Pancreas (tissue), 10 donors: ENCODE measurements at regions of chr5 and their contacts with region 1.

Region 1: GRCh38 chr5:132007399-132008165 is 3.9 kb downstream of the ACSL6 start:
- DNase-seq: peak; percentile 68 to 85 (median 76)
- ATAC-seq: peak; percentile 66 to 84 (median 78)
- H3K4me3 ChIP-seq: no peak overlapping the region
- H3K27ac ChIP-seq: no peak overlapping the region
- H3K4me1 ChIP-seq: no peaks in the 10 kb centered on the region
- H3K27me3 ChIP-seq: no peaks in the 10 kb centered on the region
- CTCF ChIP-seq: peak; percentile 59 to 75 (median 67)

Region 2: GRCh38 chr5:131589510-131590348 is 417.9 kb before region 1 on chr5:
- intact Hi-C with region 1: loop called in 2 of 3 experiments (anchors 5 kb)
- DNase-seq: peak in 1 of 6 donors; percentile 22
- ATAC-seq: peak; percentile 74 to 91 (median 86)
- H3K4me3 ChIP-seq: no peak overlapping the region
- H3K27ac ChIP-seq: no peak overlapping the region
- H3K4me1 ChIP-seq: no peaks in the 10 kb centered on the region
- H3K27me3 ChIP-seq: no peaks in the 10 kb centered on the region
- CTCF ChIP-seq: peak; percentile 32 to 69 (median 66)

Region 3: DNA sequence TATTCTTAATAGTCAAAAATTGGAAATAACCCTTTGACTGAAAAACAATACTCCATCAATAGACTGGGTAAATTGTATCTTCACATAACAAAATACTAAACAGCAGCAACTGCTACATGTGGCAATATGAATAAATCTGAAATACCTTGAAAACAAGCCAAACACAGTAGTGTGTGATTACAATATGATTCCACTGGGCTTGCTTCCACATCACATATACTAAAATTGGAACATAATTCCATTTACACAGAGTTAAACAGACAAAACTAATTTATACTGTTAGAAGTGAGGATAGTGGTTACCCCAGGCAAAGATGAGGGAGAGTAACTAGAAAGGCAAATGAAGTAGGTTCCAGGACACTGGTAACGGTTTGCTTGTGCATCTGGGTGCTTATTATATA is 231.1 kb before region 1 on chr5:
- intact Hi-C with region 1: no loop called
- DNase-seq: no peak
- ATAC-seq: peak in 3 of 4 donors; percentile 39 to 59 (median 52)
- H3K4me3 ChIP-seq: no peak overlapping the region
- H3K27ac ChIP-seq: peak overlapping the region in 1 of 4 donors; percentile 81
- H3K4me1 ChIP-seq: peaks cover 26 to 48% (median 42%) of the 10 kb centered on the region in 3 donors
- H3K27me3 ChIP-seq: no peaks in the 10 kb centered on the region
- CTCF ChIP-seq: no peak

Region 4: GRCh38 chr5:131899692-131900091 is 107.9 kb before region 1 on chr5:
- intact Hi-C with region 1: no loop called
- DNase-seq: no peak
- ATAC-seq: no peak
- H3K4me3 ChIP-seq: no peak overlapping the region
- H3K27ac ChIP-seq: no peak overlapping the region
- H3K4me1 ChIP-seq: no peaks in the 10 kb centered on the region
- H3K27me3 ChIP-seq: no peaks in the 10 kb centered on the region
- CTCF ChIP-seq: no peak

Region 5: GRCh38 chr5:132136906-132137305 is 129.3 kb after region 1 on chr5:
- intact Hi-C with region 1: no loop called
- DNase-seq: no peak
- ATAC-seq: no peak
- H3K4me3 ChIP-seq: no peak overlapping the region
- H3K27ac ChIP-seq: no peak overlapping the region
- H3K4me1 ChIP-seq: no peaks in the 10 kb centered on the region
- H3K27me3 ChIP-seq: no peaks in the 10 kb centered on the region
- CTCF ChIP-seq: no peak

Region 6: DNA sequence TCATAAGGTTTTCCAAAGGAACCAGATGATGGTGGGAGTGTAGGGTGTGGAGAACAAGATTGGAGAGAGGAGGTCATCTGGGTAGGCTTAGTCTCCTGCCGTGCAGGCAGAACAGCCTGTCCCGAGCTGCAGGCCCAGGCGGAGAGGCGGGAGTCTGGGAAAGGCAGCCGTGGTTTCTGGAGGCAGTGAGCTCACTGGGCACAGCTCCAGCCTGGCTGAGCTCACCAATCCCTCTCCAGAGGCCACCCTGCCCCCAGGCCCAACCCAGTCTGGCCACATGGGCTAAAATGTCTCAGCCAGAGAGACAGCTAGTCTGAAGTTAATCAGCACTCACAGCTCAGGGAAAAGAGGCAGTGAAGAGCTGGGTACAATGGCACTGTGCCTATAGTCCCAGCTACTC is 207.7 kb after region 1 on chr5:
- intact Hi-C with region 1: no loop called
- DNase-seq: peak; percentile 88 to 98 (median 96)
- ATAC-seq: peak; percentile 96 to 98 (median 96)
- H3K4me3 ChIP-seq: no peak overlapping the region
- H3K27ac ChIP-seq: peak overlapping the region; percentile 78 to 89 (median 82)
- H3K4me1 ChIP-seq: peaks cover 9 to 47% (median 17%) of the 10 kb centered on the region in 3 donors
- H3K27me3 ChIP-seq: no peaks in the 10 kb centered on the region
- CTCF ChIP-seq: no peak